Caco-2 (cell line): ENCODE measurements at regions of chr17 and their contacts with region 1.

Region 1: GRCh38 chr17:45172454-45173286 is 11.0 kb downstream of the HEXIM2 start:
- DNase-seq: peak; percentile 42 to 67
- H3K4me3 ChIP-seq: peak overlapping the region; percentile 2; the same call in 1 of the 2 replicates
- H3K4me3 Mint-ChIP-seq: peak overlapping the region; percentile 64
- H3K27ac Mint-ChIP-seq: peak overlapping the region; percentile 94
- H3K4me1 ChIP-seq: peaks cover 70% of the 10 kb centered on the region
- H3K4me1 Mint-ChIP-seq: peaks cover 45% of the 10 kb centered on the region
- H3K27me3 ChIP-seq: no peaks in the 10 kb centered on the region
- H3K27me3 Mint-ChIP-seq: no peaks in the 10 kb centered on the region
- CTCF ChIP-seq: peak in 1 of 2 experiments; percentile 0

Region 2: DNA sequence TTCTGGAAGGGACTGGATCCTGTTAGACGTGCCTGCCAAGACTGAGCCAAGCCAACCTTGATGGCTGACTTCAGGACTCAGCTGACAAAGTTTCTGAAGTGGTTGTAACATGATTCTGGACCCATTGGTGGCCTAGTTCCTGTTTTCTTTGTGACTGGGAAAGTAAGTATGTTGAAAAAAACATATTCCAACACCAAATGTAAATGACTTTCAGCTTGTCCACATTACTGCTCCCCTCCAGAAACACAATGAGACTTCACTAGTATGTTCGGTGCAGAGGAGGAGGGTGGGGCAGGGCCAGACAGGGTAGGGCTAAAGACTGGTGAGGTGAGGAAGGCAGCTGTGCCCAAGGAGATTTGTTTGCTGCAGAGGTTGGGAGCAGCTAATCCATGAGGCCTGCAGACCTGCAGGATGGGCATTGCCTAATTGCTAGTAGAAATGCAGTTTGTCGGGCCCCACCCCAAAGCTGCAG is 85.1 kb before region 1 on chr17:
- CTCF ChIA-PET with region 1: no interaction called
- POLR2A ChIA-PET with region 1: no interaction called
- intact Hi-C with region 1: no loop called
- DNase-seq: no peak
- H3K4me3 ChIP-seq: no peak overlapping the region
- H3K4me3 Mint-ChIP-seq: no peak overlapping the region
- H3K27ac Mint-ChIP-seq: no peak overlapping the region
- H3K4me1 ChIP-seq: no peaks in the 10 kb centered on the region
- H3K4me1 Mint-ChIP-seq: no peaks in the 10 kb centered on the region
- H3K27me3 ChIP-seq: no peaks in the 10 kb centered on the region
- H3K27me3 Mint-ChIP-seq: no peaks in the 10 kb centered on the region
- CTCF ChIP-seq: no peak

Region 3: GRCh38 chr17:45155029-45155428 is 17.6 kb before region 1 on chr17:
- CTCF ChIA-PET with region 1: interaction called, 38 read pairs
- POLR2A ChIA-PET with region 1: interaction called, 183 read pairs
- intact Hi-C with region 1: no loop called
- DNase-seq: no peak
- H3K4me3 ChIP-seq: no peak overlapping the region
- H3K4me3 Mint-ChIP-seq: no peak overlapping the region
- H3K27ac Mint-ChIP-seq: no peak overlapping the region
- H3K4me1 ChIP-seq: peaks cover 50% of the 10 kb centered on the region
- H3K4me1 Mint-ChIP-seq: peaks cover 30% of the 10 kb centered on the region
- H3K27me3 ChIP-seq: no peaks in the 10 kb centered on the region
- H3K27me3 Mint-ChIP-seq: no peaks in the 10 kb centered on the region
- CTCF ChIP-seq: no peak

Region 4: GRCh38 chr17:45161019-45161825 is 11.4 kb before region 1 on chr17:
- CTCF ChIA-PET with region 1: interaction called, 31 read pairs
- POLR2A ChIA-PET with region 1: interaction called, 183 read pairs
- intact Hi-C with region 1: loop called (anchors 1 kb)
- DNase-seq: peak; percentile 99 to 100
- H3K4me3 ChIP-seq: peak overlapping the region; percentile 61
- H3K4me3 Mint-ChIP-seq: peak overlapping the region; percentile 77
- H3K27ac Mint-ChIP-seq: peak overlapping the region; percentile 99
- H3K4me1 ChIP-seq: peaks cover 45% of the 10 kb centered on the region
- H3K4me1 Mint-ChIP-seq: peaks cover 27% of the 10 kb centered on the region
- H3K27me3 ChIP-seq: no peaks in the 10 kb centered on the region
- H3K27me3 Mint-ChIP-seq: no peaks in the 10 kb centered on the region
- CTCF ChIP-seq: no peak

Region 5: GRCh38 chr17:45197555-45198334 is 25.1 kb after region 1 on chr17:
- CTCF ChIA-PET with region 1: interaction called, 47 read pairs
- POLR2A ChIA-PET with region 1: interaction called, 10 read pairs
- intact Hi-C with region 1: loop called (anchors 1 kb)
- DNase-seq: peak; percentile 96 to 99
- H3K4me3 ChIP-seq: no peak overlapping the region
- H3K4me3 Mint-ChIP-seq: no peak overlapping the region
- H3K27ac Mint-ChIP-seq: peak overlapping the region; percentile 85
- H3K4me1 ChIP-seq: peaks cover 33% of the 10 kb centered on the region
- H3K4me1 Mint-ChIP-seq: peaks cover 14% of the 10 kb centered on the region
- H3K27me3 ChIP-seq: no peaks in the 10 kb centered on the region
- H3K27me3 Mint-ChIP-seq: no peaks in the 10 kb centered on the region
- CTCF ChIP-seq: peak; percentile 99 to 100